MCF 10A (cell line): ENCODE measurements at regions of chr1 and their contacts with region 1.

Region 1: DNA sequence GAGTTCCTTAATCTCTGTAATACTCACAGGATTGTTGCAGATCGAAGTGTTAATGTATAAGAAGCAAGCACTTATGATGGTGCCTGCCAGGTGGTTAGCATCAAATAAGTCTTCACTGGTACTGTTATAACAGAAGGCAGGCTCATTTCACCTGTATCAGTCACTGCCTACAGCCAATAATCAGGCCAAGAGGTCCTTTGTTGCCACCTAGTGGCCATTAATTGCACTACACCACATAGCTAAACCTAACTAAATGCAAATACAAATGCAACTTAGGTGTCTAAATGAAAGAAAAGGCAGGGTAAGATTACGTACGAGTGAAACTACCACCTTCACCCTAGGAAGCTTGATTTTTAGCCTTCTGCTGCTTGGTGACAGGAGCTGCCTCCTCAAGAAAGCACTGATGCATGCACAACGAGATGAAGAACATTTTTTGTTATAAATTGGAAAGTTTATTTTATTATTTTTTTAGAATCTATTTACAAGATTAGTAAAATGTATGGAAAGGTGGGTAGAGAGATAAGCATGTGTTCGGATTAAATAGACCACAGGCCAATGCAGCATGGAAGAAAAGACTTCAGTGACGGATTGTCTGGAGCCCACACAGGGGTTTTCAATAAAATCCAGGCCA is 334.8 kb upstream of the CAMK1G start:
- DNase-seq: peak; percentile 91
- H3K4me3 Mint-ChIP-seq: no peak overlapping the region
- H3K27ac Mint-ChIP-seq: no peak overlapping the region
- H3K4me1 Mint-ChIP-seq: peaks cover 5% of the 10 kb centered on the region
- H3K27me3 Mint-ChIP-seq: no peaks in the 10 kb centered on the region
- CTCF ChIP-seq: peak; percentile 99

Region 2: DNA sequence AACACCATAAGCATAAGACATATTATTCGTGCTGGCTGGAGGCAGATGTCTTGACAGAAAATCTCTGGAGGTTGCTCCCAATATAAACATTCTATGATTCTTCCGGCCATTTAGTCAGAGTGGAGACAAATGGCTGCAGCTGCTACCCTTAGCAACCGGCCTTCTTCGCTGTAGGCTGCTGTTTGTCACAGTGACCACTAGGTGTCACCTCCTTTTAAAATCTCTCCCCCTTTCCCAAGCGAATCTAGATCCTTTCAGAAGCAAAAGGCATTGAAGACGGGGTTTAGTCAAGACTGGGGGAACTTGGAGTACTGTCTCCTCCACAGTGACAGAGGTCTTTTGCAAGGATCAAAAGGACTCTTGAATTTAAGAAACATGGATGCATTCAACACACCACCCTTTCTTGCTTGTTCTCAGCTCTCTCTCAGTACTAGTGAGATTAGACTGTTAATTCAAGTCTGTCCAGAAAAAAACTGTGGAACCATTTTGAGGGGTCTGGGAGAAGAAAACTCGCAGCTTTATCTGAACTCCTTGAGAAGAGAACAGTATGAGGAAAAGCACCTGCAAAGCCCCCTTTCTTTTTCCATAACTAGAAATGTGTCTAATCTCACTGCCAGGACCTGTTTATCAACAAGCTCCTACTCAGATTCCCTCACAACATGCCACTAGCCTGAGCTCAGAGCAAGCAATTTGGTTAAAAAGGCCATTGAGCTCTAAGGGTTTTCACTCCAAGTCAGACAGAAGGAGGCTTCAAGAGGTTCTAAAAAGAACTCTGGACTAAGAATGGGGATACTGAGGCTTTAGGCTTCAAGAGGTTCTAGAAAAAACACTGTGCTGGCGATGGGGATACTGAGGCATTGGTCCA is 596.2 kb before region 1 on chr1:
- CTCF ChIA-PET with region 1: interaction called, 59 read pairs
- POLR2A ChIA-PET with region 1: no interaction called
- intact Hi-C with region 1: loop called (anchors 1 kb)
- DNase-seq: peak; percentile 83
- H3K4me3 Mint-ChIP-seq: no peak overlapping the region
- H3K27ac Mint-ChIP-seq: no peak overlapping the region
- H3K4me1 Mint-ChIP-seq: peaks cover 13% of the 10 kb centered on the region
- H3K27me3 Mint-ChIP-seq: peaks cover 21% of the 10 kb centered on the region
- CTCF ChIP-seq: peak; percentile 98

Region 3: DNA sequence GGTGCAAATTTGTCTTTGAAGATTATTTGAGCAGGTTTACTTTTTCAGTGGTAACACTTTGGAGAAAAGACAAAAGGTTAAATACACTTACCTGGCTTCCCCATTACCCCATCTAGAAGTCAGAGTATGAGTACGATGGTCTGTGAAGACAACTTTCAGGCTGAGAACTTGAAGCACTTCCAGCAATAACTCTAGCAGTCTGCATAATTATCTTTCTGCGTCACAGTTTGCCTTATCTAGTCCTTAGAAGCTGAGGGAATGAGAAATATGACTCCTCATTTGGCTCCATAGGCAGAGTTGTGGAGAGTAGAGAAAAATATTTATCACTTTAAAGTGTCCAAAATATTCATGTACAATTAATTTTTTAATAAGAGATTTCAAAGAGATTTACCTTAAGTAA is 11.4 kb after region 1 on chr1:
- CTCF ChIA-PET with region 1: interaction called, 74 read pairs
- POLR2A ChIA-PET with region 1: interaction called, 4 read pairs
- intact Hi-C with region 1: no loop called
- DNase-seq: no peak
- H3K4me3 Mint-ChIP-seq: no peak overlapping the region
- H3K27ac Mint-ChIP-seq: no peak overlapping the region
- H3K4me1 Mint-ChIP-seq: no peaks in the 10 kb centered on the region
- H3K27me3 Mint-ChIP-seq: no peaks in the 10 kb centered on the region
- CTCF ChIP-seq: no peak

Region 4: GRCh38 chr1:209335178-209335577 is 86.4 kb after region 1 on chr1:
- CTCF ChIA-PET with region 1: interaction called, 12 read pairs
- POLR2A ChIA-PET with region 1: no interaction called
- intact Hi-C with region 1: no loop called
- DNase-seq: peak; percentile 75
- H3K4me3 Mint-ChIP-seq: no peak overlapping the region
- H3K27ac Mint-ChIP-seq: no peak overlapping the region
- H3K4me1 Mint-ChIP-seq: peaks cover 5% of the 10 kb centered on the region
- H3K27me3 Mint-ChIP-seq: no peaks in the 10 kb centered on the region
- CTCF ChIP-seq: peak; percentile 96

Region 5: DNA sequence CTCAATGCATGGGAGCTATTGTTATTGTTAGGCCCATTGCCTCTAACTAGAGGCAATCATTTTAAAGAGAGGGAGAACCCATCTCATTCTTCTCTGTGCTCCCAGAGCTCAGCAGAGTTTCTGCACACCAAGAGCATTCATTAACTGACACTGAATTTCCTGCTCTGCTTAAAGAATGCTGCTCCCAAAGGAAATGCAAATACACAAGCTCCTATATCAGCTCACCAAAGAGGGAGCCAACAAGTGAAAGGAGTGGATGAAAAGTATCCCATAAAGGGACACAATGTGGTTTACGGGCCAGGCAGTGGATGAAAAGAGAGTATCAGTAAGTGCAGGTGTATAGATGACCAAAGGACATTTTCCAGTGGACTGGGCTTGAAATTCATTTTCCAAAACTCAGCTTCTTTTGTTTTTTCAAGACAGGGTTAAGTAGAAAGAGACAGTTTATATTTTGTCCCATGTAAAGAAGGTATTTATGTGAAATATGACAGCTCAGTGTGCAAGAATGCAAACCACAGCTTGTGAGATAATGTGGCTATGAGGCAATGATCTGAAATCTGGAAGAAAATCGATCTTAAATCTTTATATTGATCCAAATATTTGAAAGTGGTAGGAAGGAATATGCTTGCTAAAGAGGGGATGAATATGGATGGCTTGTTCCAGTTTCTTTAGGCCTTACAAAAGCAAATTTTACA is 127.1 kb after region 1 on chr1:
- CTCF ChIA-PET with region 1: interaction called, 11 read pairs
- POLR2A ChIA-PET with region 1: no interaction called
- intact Hi-C with region 1: no loop called
- DNase-seq: no peak
- H3K4me3 Mint-ChIP-seq: no peak overlapping the region
- H3K27ac Mint-ChIP-seq: peak overlapping the region; percentile 84
- H3K4me1 Mint-ChIP-seq: peaks cover 69% of the 10 kb centered on the region
- H3K27me3 Mint-ChIP-seq: no peaks in the 10 kb centered on the region
- CTCF ChIP-seq: no peak

Region 6: GRCh38 chr1:209435654-209436566 is 187.1 kb after region 1 on chr1:
- CTCF ChIA-PET with region 1: interaction called, 74 read pairs
- POLR2A ChIA-PET with region 1: interaction called, 22 read pairs
- intact Hi-C with region 1: loop called (anchors 1 kb)
- DNase-seq: peak; percentile 97
- H3K4me3 Mint-ChIP-seq: no peak overlapping the region
- H3K27ac Mint-ChIP-seq: peak overlapping the region; percentile 90
- H3K4me1 Mint-ChIP-seq: peaks cover 51% of the 10 kb centered on the region
- H3K27me3 Mint-ChIP-seq: no peaks in the 10 kb centered on the region
- CTCF ChIP-seq: peak; percentile 100

Region 7: GRCh38 chr1:209513226-209513625 is 264.5 kb after region 1 on chr1:
- CTCF ChIA-PET with region 1: interaction called, 11 read pairs
- POLR2A ChIA-PET with region 1: interaction called, 3 read pairs
- intact Hi-C with region 1: loop called (anchors 2 kb)
- DNase-seq: peak; percentile 84
- H3K4me3 Mint-ChIP-seq: no peak overlapping the region
- H3K27ac Mint-ChIP-seq: no peak overlapping the region
- H3K4me1 Mint-ChIP-seq: peaks cover 11% of the 10 kb centered on the region
- H3K27me3 Mint-ChIP-seq: no peaks in the 10 kb centered on the region
- CTCF ChIP-seq: peak; percentile 93